Activated B cell treated with CpG ODN at 0.5 μM for 24 hours (primary cell): ENCODE measurements at regions of chr19 and their contacts with region 1.

Region 1: GRCh38 chr19:10279737-10280442 is 6.9 kb upstream of the ICAM4 start:
- DNase-seq: no peak
- ATAC-seq: no peak
- H3K4me3 Mint-ChIP-seq: no peak overlapping the region
- H3K27ac Mint-ChIP-seq: peak overlapping the region; percentile 59
- H3K4me1 Mint-ChIP-seq: peaks cover 30% of the 10 kb centered on the region
- H3K27me3 Mint-ChIP-seq: no peaks in the 10 kb centered on the region
- CTCF ChIP-seq: no peak

Region 2: DNA sequence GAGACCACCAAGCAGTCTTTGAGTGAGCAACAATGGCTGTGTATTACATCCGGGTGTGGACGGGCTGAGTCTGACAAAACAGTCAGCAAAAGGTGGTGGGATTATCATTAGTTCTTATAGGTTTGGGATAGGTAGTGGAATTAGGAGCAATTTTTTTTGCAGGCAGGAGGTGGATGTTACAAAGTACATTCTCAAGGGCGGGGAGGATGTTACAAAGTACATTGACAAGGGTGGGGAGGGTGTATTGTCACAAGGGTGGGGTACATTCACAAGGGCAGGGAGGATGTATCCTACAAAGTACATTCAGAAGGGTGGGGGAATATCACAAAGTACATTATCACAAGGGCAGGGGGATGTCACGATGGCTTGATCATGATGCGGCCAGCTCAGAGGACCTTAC is 643.9 kb before region 1 on chr19:
- CTCF ChIA-PET with region 1: no interaction called
- POLR2A ChIA-PET with region 1: no interaction called
- intact Hi-C with region 1: no loop called
- DNase-seq: no peak
- ATAC-seq: no peak
- H3K4me3 Mint-ChIP-seq: no peak overlapping the region
- H3K27ac Mint-ChIP-seq: no peak overlapping the region
- H3K4me1 Mint-ChIP-seq: no peaks in the 10 kb centered on the region
- H3K27me3 Mint-ChIP-seq: no peaks in the 10 kb centered on the region
- CTCF ChIP-seq: no peak

Region 3: DNA sequence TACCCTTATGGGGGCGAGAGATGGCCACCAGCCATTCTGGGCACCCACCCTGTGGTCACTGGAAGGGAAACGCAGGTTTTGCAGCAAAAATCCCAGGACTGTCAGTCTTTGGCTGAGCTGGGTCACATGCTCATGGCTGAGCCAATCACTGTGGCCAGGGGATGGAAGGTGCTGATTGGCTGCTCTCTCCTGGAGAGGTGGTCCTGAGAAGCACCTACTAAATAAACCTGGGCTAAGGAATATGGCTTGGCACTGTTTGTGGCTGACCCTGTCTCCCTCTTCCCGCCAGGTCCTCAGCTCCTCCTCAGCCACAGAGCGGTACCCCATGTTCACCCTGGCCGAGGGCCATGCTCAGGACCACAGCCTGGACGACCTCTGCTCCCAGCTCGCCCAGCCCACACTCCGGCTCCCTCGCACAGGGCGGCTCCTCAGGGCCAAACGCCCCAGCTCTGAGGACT is 272.7 kb after region 1 on chr19:
- CTCF ChIA-PET with region 1: no interaction called
- POLR2A ChIA-PET with region 1: interaction called, 17 read pairs
- intact Hi-C with region 1: no loop called
- DNase-seq: no peak
- ATAC-seq: no peak
- H3K4me3 Mint-ChIP-seq: no peak overlapping the region
- H3K27ac Mint-ChIP-seq: peak overlapping the region; percentile 92
- H3K4me1 Mint-ChIP-seq: peaks cover 38% of the 10 kb centered on the region
- H3K27me3 Mint-ChIP-seq: no peaks in the 10 kb centered on the region
- CTCF ChIP-seq: no peak

Region 4: GRCh38 chr19:10580979-10581631 is 301.2 kb after region 1 on chr19:
- CTCF ChIA-PET with region 1: no interaction called
- POLR2A ChIA-PET with region 1: no interaction called
- intact Hi-C with region 1: no loop called
- DNase-seq: peak; percentile 80
- ATAC-seq: peak; percentile 100
- H3K4me3 Mint-ChIP-seq: no peak overlapping the region
- H3K27ac Mint-ChIP-seq: no peak overlapping the region
- H3K4me1 Mint-ChIP-seq: peaks cover 16% of the 10 kb centered on the region
- H3K27me3 Mint-ChIP-seq: no peaks in the 10 kb centered on the region
- CTCF ChIP-seq: peak; percentile 73